Activated CD8-positive, alpha-beta memory T cell treated with anti-CD3 and anti-CD28 coated beads, Interleukin-2, amount 10 ng/mL, durations not matched to agents 7 days and 5 days (primary cell): ENCODE measurements at regions of chr1 and their contacts with region 1.

Region 1: GRCh38 chr1:35564037-35564883 is 6.7 kb downstream of the NCDN start:
- DNase-seq: peak; percentile 90
- ATAC-seq: peak; percentile 80
- H3K4me3 Mint-ChIP-seq: no peak overlapping the region
- H3K27ac Mint-ChIP-seq: no peak overlapping the region
- H3K4me1 Mint-ChIP-seq: peaks cover 14% of the 10 kb centered on the region
- H3K27me3 Mint-ChIP-seq: no peaks in the 10 kb centered on the region

Region 2: GRCh38 chr1:35319988-35320713 is 244.1 kb before region 1 on chr1:
- CTCF ChIA-PET with region 1: no interaction called
- DNase-seq: no peak
- ATAC-seq: no peak
- H3K4me3 Mint-ChIP-seq: no peak overlapping the region
- H3K27ac Mint-ChIP-seq: no peak overlapping the region
- H3K4me1 Mint-ChIP-seq: no peaks in the 10 kb centered on the region
- H3K27me3 Mint-ChIP-seq: no peaks in the 10 kb centered on the region

Region 3: DNA sequence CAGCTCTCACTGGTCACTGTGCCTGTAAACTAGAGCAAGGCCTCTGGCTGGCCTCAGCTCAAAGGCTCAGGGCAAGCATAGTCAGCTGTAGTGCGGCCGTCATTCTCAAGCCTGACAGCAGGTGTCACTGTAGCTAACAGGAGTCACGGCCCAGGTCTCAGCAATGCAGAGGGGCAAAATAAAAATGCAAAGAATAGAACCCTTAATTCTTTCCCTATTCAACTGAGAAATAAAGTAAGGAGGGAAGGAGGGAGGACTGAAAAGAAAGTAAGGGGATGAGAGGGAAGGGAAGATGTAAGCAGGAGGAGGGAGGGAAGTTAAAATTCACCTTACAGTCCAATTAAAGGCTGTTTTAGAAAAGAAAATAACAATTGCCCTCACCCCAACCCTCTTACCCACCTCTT is 113.1 kb before region 1 on chr1:
- CTCF ChIA-PET with region 1: interaction called, 140 read pairs
- DNase-seq: peak; percentile 86
- ATAC-seq: peak; percentile 93
- H3K4me3 Mint-ChIP-seq: no peak overlapping the region
- H3K27ac Mint-ChIP-seq: peak overlapping the region; percentile 36
- H3K4me1 Mint-ChIP-seq: peaks cover 17% of the 10 kb centered on the region
- H3K27me3 Mint-ChIP-seq: no peaks in the 10 kb centered on the region

Region 4: DNA sequence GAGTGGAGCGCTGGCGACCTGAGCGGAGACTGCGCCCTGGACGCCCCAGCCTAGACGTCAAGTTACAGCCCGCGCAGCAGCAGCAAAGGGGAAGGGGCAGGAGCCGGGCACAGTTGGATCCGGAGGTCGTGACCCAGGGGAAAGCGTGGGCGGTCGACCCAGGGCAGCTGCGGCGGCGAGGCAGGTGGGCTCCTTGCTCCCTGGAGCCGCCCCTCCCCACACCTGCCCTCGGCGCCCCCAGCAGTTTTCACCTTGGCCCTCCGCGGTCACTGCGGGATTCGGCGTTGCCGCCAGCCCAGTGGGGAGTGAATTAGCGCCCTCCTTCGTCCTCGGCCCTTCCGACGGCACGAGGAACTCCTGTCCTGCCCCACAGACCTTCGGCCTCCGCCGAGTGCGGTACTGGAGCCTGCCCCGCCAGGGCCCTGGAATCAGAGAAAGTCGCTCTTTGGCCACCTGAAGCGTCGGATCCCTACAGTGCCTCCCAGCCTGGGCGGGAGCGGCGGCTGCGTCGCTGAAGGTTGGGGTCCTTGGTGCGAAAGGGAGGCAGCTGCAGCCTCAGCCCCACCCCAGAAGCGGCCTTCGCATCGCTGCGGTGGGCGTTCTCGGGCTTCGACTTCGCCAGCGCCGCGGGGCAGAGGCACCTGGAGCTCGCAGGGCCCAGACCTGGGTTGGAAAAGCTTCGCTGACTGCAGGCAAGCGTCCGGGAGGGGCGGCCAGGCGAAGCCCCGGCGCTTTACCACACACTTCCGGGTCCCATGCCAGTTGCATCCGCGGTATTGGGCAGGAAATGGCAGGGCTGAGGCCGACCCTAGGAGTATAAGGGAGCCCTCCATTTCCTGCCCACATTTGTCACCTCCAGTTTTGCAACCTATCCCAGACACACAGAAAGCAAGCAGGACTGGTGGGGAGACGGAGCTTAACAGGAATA is 13.1 kb after region 1 on chr1:
- CTCF ChIA-PET with region 1: interaction called, 24 read pairs
- DNase-seq: peak; percentile 91
- ATAC-seq: peak; percentile 91
- H3K4me3 Mint-ChIP-seq: peak overlapping the region; percentile 77
- H3K27ac Mint-ChIP-seq: peak overlapping the region; percentile 86
- H3K4me1 Mint-ChIP-seq: peaks cover 30% of the 10 kb centered on the region
- H3K27me3 Mint-ChIP-seq: peaks cover 29% of the 10 kb centered on the region

Region 5: DNA sequence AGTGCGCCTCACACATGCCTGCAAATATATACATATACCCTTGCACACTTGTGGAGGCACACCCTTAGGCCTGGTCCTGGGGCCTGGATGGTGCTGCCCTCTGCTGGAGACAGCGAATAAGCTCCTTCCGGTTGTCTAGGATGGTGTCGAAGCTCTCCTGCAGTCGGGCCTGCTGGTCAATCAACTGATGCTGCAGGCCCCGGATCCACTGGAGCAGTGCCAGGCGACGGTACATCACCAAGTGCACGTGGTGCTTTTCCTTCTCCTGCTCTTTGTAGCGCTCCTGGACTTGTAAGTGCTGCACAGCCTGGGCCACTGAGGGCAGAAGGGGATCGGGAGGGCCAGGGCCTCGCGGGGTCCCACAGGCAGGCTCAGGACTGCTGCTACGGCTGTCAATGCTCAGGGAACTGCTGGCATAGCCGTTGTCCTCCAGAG is 151.3 kb after region 1 on chr1:
- CTCF ChIA-PET with region 1: interaction called, 144 read pairs
- DNase-seq: peak; percentile 88
- ATAC-seq: peak; percentile 70
- H3K4me3 Mint-ChIP-seq: peak overlapping the region; percentile 5
- H3K27ac Mint-ChIP-seq: peak overlapping the region; percentile 50
- H3K4me1 Mint-ChIP-seq: peaks cover 36% of the 10 kb centered on the region
- H3K27me3 Mint-ChIP-seq: no peaks in the 10 kb centered on the region

Region 6: GRCh38 chr1:35769188-35769758 is 205.0 kb after region 1 on chr1:
- CTCF ChIA-PET with region 1: interaction called, 16 read pairs
- DNase-seq: peak; percentile 94
- ATAC-seq: peak; percentile 87
- H3K4me3 Mint-ChIP-seq: peak overlapping the region; percentile 96
- H3K27ac Mint-ChIP-seq: peak overlapping the region; percentile 79
- H3K4me1 Mint-ChIP-seq: peaks cover 31% of the 10 kb centered on the region
- H3K27me3 Mint-ChIP-seq: no peaks in the 10 kb centered on the region